Natural killer cell (primary cell): ENCODE measurements at regions of chr3 and their contacts with region 1.

Region 1: GRCh38 chr3:186108941-186109865 is at the start of gene ETV5:
- DNase-seq: peak; percentile 92 to 96
- ATAC-seq: peak; percentile 87 to 98 (median 92)
- H3K4me3 ChIP-seq: peak within 1 kb of the TSS; percentile 57
- H3K4me3 Mint-ChIP-seq: peak within 1 kb of the TSS; percentile 96
- H3K27ac ChIP-seq: no peak within 1 kb of the TSS
- H3K27ac Mint-ChIP-seq: peak within 1 kb of the TSS; percentile 88 to 92
- H3K4me1 ChIP-seq: peaks cover 32% of the 10 kb centered on the region
- H3K4me1 Mint-ChIP-seq: peaks cover 39 to 41% of the 10 kb centered on the region in 2 donors
- H3K27me3 ChIP-seq: peaks cover 51% of the 10 kb centered on the region
- H3K27me3 Mint-ChIP-seq: peaks cover 54 to 59% of the 10 kb centered on the region in 2 donors
- CTCF ChIP-seq: no peak
- total RNA-seq, gene ETV5: 3.0 to 5.3 (median 4.6) TPM

Region 2: DNA sequence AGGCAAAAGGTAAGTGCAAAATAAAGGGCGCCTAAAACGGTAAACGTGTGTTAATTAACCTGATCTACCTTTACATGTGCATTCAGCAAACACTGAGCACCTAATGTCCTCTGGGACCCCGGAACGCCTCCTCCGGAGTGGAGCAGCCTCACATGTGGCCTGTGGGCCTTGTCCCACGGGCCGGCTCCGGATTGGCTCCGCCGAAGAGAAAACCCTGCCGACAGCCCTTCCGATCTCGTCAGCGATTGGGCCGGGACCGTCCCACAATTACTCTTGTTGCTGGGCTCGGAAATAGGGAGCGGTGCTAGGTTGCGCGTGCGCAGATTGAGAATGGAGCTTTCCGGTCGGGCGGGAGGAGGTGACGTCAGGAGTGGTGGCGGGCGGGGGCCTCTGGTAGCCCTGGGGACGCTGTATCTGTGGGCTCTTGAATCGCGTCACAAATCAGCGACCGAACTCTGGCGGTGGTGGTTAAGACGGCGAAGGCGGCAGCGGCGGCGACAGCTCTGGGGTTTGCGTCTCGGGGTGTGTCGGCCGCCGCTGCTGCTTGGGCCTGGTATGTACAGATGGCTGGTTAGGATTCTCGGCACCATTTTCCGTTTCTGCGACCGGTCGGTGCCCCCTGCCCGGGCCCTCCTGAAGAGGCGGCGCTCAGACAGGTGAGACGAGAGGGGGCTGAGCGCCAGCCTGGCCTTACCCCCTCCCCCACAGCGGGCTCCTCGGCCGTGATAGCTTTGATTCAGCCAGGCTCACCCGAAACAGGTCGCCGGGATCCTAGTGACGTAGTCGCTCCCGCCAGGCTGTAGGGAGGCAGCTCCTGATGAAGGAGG is 523.1 kb before region 1 on chr3 and contains the start of gene SENP2:
- intact Hi-C with region 1: loop called (anchors 1 kb)
- DNase-seq: peak; percentile 100
- ATAC-seq: peak; percentile 80 to 93 (median 85)
- H3K4me3 ChIP-seq: peak within 1 kb of the TSS; percentile 98
- H3K4me3 Mint-ChIP-seq: peak within 1 kb of the TSS; percentile 92
- H3K27ac ChIP-seq: peak within 1 kb of the TSS; percentile 99
- H3K27ac Mint-ChIP-seq: peak within 1 kb of the TSS; percentile 93 to 98
- H3K4me1 ChIP-seq: peaks cover 40% of the 10 kb centered on the region
- H3K4me1 Mint-ChIP-seq: peaks cover 47 to 50% of the 10 kb centered on the region in 2 donors
- H3K27me3 ChIP-seq: no peaks in the 10 kb centered on the region
- H3K27me3 Mint-ChIP-seq: no peaks in the 10 kb centered on the region
- CTCF ChIP-seq: no peak
- total RNA-seq, gene SENP2: 57.8 to 59.8 (median 58.7) TPM

Region 3: GRCh38 chr3:185937689-185938463 is 171.3 kb before region 1 on chr3 and contains the start of gene TRA2B:
- intact Hi-C with region 1: loop called (anchors 1 kb)
- DNase-seq: peak; percentile 97 to 99
- ATAC-seq: peak; percentile 87 to 96 (median 88)
- H3K4me3 ChIP-seq: peak within 1 kb of the TSS; percentile 100
- H3K4me3 Mint-ChIP-seq: peak within 1 kb of the TSS; percentile 100
- H3K27ac ChIP-seq: peak within 1 kb of the TSS; percentile 100
- H3K27ac Mint-ChIP-seq: peak within 1 kb of the TSS; percentile 100
- H3K4me1 ChIP-seq: peaks cover 5% of the 10 kb centered on the region
- H3K4me1 Mint-ChIP-seq: peaks cover 53% of the 10 kb centered on the region in 2 donors
- H3K27me3 ChIP-seq: no peaks in the 10 kb centered on the region
- H3K27me3 Mint-ChIP-seq: no peaks in the 10 kb centered on the region
- CTCF ChIP-seq: peak; percentile 37
- total RNA-seq, gene TRA2B: 565 to 669 (median 596) TPM

Region 4: GRCh38 chr3:186021673-186022362 is 87.4 kb before region 1 on chr3:
- intact Hi-C with region 1: no loop called
- DNase-seq: no peak
- ATAC-seq: no peak
- H3K4me3 ChIP-seq: no peak overlapping the region
- H3K4me3 Mint-ChIP-seq: no peak overlapping the region
- H3K27ac ChIP-seq: no peak overlapping the region
- H3K27ac Mint-ChIP-seq: no peak overlapping the region
- H3K4me1 ChIP-seq: no peaks in the 10 kb centered on the region
- H3K4me1 Mint-ChIP-seq: no peaks in the 10 kb centered on the region
- H3K27me3 ChIP-seq: peaks cover 4% of the 10 kb centered on the region
- H3K27me3 Mint-ChIP-seq: peaks cover 28 to 43% of the 10 kb centered on the region in 2 donors
- CTCF ChIP-seq: no peak

Region 5: DNA sequence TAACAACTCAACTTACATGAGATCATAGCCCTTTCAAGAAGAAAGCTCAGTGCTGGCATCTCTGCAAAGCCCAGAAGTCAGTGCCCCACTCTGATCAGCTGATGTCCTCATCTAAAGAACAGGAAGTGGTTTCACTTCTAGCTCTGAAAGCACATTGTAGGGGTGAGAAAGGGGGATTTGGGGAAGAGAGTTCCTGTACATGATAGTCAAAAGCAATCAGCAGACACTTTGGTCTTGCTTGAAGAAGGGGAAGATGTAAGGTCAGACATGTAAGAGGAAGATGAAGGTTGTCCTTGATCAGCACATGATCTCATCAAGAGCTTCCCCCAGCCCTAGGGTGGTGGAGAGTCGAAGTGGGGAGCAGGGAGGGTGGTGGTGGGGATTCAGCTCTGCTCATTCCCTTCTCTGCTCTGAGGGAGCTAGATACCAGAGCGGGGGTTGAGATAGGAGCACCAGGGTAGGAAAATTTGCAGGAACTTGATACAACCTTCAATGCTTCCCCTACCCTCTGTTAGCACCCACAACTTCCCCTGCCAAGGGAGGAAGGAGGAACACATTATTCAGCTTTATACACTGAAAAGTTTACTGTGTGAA is 76.1 kb after region 1 on chr3:
- intact Hi-C with region 1: loop called (anchors 2 kb)
- DNase-seq: peak in 1 of 2 donors; percentile 60
- ATAC-seq: peak; percentile 79 to 85 (median 85)
- H3K4me3 ChIP-seq: no peak overlapping the region
- H3K4me3 Mint-ChIP-seq: peak overlapping the region; percentile 55
- H3K27ac ChIP-seq: peak overlapping the region; percentile 48
- H3K27ac Mint-ChIP-seq: peak overlapping the region; percentile 44 to 73
- H3K4me1 ChIP-seq: peaks cover 34% of the 10 kb centered on the region
- H3K4me1 Mint-ChIP-seq: peaks cover 24 to 38% of the 10 kb centered on the region in 2 donors
- H3K27me3 ChIP-seq: no peaks in the 10 kb centered on the region
- H3K27me3 Mint-ChIP-seq: peaks cover 6% of the 10 kb centered on the region in 2 donors
- CTCF ChIP-seq: no peak

Region 6: DNA sequence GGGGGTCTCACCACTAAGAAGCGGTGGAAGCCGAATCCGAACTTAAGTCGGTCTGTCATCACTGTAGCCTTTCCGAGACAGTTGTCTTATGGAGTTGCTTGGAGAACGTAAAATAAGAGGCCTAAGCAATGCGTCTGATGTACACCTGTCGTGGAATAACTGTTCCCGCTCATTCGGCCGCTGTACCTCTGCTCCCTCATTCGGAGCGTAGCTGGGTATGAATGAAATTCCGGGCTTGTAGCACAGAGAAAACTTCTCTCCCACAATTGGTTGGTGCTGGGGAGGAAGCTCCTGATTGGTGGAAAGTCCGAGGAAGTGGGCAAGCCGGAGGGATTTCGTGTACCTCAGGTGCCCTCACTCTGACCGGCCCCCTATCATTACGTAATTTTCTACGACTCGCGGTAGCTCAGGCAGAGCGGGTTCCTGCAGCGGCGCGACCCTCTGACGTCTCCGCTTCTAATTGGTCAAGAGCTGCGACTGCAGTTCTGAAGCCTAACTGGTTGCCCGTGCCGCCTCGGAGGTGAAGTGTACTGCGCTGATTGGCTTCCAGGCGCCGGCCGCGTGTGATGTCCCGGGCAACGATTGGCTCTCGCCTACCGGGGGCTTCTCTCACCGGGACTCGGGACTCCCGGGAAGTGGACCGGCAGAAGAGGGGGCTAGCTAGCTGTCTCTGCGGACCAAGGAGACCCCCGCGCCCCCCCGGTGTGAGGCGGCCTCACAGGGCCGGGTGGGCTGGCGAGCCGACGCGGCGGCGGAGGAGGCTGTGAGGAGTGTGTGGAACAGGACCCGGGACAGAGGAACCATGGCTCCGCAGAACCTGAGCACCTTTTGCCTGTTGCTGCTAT is 461.1 kb after region 1 on chr3 and contains the start of gene DNAJB11:
- intact Hi-C with region 1: loop called (anchors 1 kb)
- DNase-seq: peak; percentile 97 to 99
- ATAC-seq: peak; percentile 83 to 95 (median 83)
- H3K4me3 ChIP-seq: peak within 1 kb of the TSS; percentile 84
- H3K4me3 Mint-ChIP-seq: peak within 1 kb of the TSS; percentile 99
- H3K27ac ChIP-seq: peak within 1 kb of the TSS; percentile 95
- H3K27ac Mint-ChIP-seq: peak within 1 kb of the TSS; percentile 97 to 98
- H3K4me1 ChIP-seq: peaks cover 36% of the 10 kb centered on the region
- H3K4me1 Mint-ChIP-seq: peaks cover 50 to 58% of the 10 kb centered on the region in 2 donors
- H3K27me3 ChIP-seq: no peaks in the 10 kb centered on the region
- H3K27me3 Mint-ChIP-seq: no peaks in the 10 kb centered on the region
- CTCF ChIP-seq: no peak
- total RNA-seq, gene DNAJB11: 85.9 to 112 (median 111) TPM

Region 7: GRCh38 chr3:186930641-186931531 is 821.7 kb after region 1 on chr3:
- intact Hi-C with region 1: loop called (anchors 2 kb)
- DNase-seq: peak; percentile 55 to 85
- ATAC-seq: peak; percentile 77 to 86 (median 78)
- H3K4me3 ChIP-seq: peak overlapping the region; percentile 79
- H3K4me3 Mint-ChIP-seq: peak overlapping the region; percentile 96
- H3K27ac ChIP-seq: peak overlapping the region; percentile 92
- H3K27ac Mint-ChIP-seq: peak overlapping the region; percentile 93 to 95
- H3K4me1 ChIP-seq: peaks cover 37% of the 10 kb centered on the region
- H3K4me1 Mint-ChIP-seq: peaks cover 38 to 46% of the 10 kb centered on the region in 2 donors
- H3K27me3 ChIP-seq: no peaks in the 10 kb centered on the region
- H3K27me3 Mint-ChIP-seq: no peaks in the 10 kb centered on the region
- CTCF ChIP-seq: no peak

Region 8: GRCh38 chr3:187139126-187139894 is 1030.1 kb after region 1 on chr3 and contains the start of gene RPL39L:
- intact Hi-C with region 1: loop called (anchors 5 kb)
- DNase-seq: peak; percentile 96 to 97
- ATAC-seq: peak; percentile 94 to 98 (median 95)
- H3K4me3 ChIP-seq: peak within 1 kb of the TSS; percentile 62
- H3K4me3 Mint-ChIP-seq: peak within 1 kb of the TSS; percentile 89
- H3K27ac ChIP-seq: peak within 1 kb of the TSS; percentile 90
- H3K27ac Mint-ChIP-seq: peak within 1 kb of the TSS; percentile 94 to 98
- H3K4me1 ChIP-seq: peaks cover 17% of the 10 kb centered on the region
- H3K4me1 Mint-ChIP-seq: peaks cover 20 to 33% of the 10 kb centered on the region in 2 donors
- H3K27me3 ChIP-seq: no peaks in the 10 kb centered on the region
- H3K27me3 Mint-ChIP-seq: no peaks in the 10 kb centered on the region
- CTCF ChIP-seq: peak; percentile 88
- total RNA-seq, gene RPL39L: 3.1 to 6.6 (median 4.3) TPM